ENCODE measurements at regions of chr14 and their contacts with region 1.

Region 1: GRCh38 chr14:24332268-24332993 is 2.4 kb downstream of the ADCY4 start:
- DNase-seq: peak; percentile 89 to 95 (median 94)
- H3K4me3 ChIP-seq: peak overlapping the region in 6 of 7 experiments; percentile 19 to 63 (median 30)
- H3K27ac ChIP-seq: no peak overlapping the region
- H3K4me1 ChIP-seq: peaks cover 15 to 71% (median 68%) of the 10 kb centered on the region in 4 experiments
- H3K27me3 ChIP-seq: peaks cover 0 to 34% (median 10%) of the 10 kb centered on the region in 5 experiments

Region 2: GRCh38 chr14:24378981-24379906 is 46.8 kb after region 1 on chr14:
- CTCF ChIA-PET with region 1: interaction called, 10 read pairs
- POLR2A ChIA-PET with region 1: interaction called, 3 read pairs
- DNase-seq: no peak
- H3K4me3 ChIP-seq: no peak overlapping the region
- H3K27ac ChIP-seq: no peak overlapping the region
- H3K4me1 ChIP-seq: peaks cover 0 to 17% (median 9%) of the 10 kb centered on the region in 4 experiments
- H3K27me3 ChIP-seq: no peaks in the 10 kb centered on the region

Region 3: DNA sequence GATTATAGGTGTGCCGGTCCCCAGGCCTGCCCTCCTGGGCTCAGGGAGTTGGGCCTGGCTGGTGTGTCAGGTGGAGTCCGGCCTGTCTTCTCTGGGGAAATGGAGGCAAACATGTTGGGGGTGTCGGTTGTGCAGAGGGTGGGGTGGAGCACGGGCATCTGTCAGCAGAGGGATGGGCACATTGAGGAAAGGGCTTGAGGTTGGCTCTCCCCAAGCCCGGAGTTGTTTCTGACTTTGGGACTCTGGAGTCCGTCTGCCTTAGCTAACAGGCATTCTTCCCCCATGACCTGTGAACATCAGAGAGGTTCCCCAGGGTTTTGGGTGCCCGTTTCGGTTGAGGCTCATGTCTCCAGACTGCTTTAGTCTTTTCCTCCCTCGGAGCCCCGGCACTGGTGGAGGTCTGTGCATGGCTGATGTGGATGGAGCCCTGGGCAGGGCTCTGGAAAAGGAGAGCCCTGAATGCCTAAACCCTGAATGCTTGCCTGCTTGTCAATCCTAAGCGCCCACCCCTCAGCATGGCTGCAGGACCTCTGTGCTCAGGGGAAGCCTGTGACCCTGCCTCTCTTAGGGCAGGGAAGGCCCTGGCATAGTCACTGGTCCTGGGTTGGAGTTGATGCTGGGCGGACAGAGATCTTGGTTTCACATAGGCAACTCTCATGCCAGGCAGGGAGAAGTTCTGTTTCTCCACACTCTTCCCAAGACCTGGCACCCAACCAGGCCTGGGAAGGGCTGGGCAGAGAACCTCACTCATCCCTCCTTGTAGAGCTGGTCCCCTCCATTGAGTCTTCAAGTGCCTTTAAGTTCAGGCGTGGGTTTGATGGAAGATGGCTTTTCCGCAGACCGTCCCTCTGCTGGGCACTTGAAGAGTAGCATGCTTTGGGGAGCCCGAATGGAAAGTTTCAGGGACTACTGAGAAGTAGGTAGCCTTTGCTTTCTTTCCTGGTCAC is 79.3 kb after region 1 on chr14:
- CTCF ChIA-PET with region 1: interaction called, 22 read pairs
- POLR2A ChIA-PET with region 1: interaction called, 3 read pairs
- DNase-seq: peak; percentile 64 to 78 (median 76)
- H3K4me3 ChIP-seq: no peak overlapping the region
- H3K27ac ChIP-seq: no peak overlapping the region
- H3K4me1 ChIP-seq: no peaks in the 10 kb centered on the region
- H3K27me3 ChIP-seq: no peaks in the 10 kb centered on the region

Measured in common myeloid progenitor, CD34-positive (primary cell).